Left cardiac atrium (tissue), 4 donors: ENCODE measurements at regions of chr17 and their contacts with region 1.

Region 1: GRCh38 chr17:4449736-4450135 is 16.0 kb downstream of the SPNS3 start:
- DNase-seq: no peak
- ATAC-seq: peak in 1 of 2 donors; percentile 46

Region 2: GRCh38 chr17:5155495-5155894 is 705.8 kb after region 1 on chr17:
- intact Hi-C with region 1: loop called in 1 of 2 experiments (anchors 5 kb)
- DNase-seq: no peak
- ATAC-seq: no peak